B cell (primary cell): ENCODE measurements at regions of chr16 and their contacts with region 1.

Region 1: GRCh38 chr16:71591917-71592316 is 15.0 kb upstream of the TAT start:
- DNase-seq: no peak
- ATAC-seq: no peak
- H3K4me3 ChIP-seq: no peak overlapping the region
- H3K4me3 Mint-ChIP-seq: no peak overlapping the region
- H3K27ac ChIP-seq: no peak overlapping the region
- H3K27ac Mint-ChIP-seq: no peak overlapping the region
- H3K4me1 ChIP-seq: peaks cover 0 to 8% of the 10 kb centered on the region in 2 donors
- H3K4me1 Mint-ChIP-seq: peaks cover 8% of the 10 kb centered on the region
- H3K27me3 ChIP-seq: peaks cover 0 to 19% (median 7%) of the 10 kb centered on the region in 4 experiments
- H3K27me3 Mint-ChIP-seq: peaks cover 34% of the 10 kb centered on the region
- CTCF ChIP-seq: no peak

Region 2: GRCh38 chr16:71373073-71373472 is 218.8 kb before region 1 on chr16:
- CTCF ChIA-PET with region 1: no interaction called
- POLR2A ChIA-PET with region 1: no interaction called
- intact Hi-C with region 1: no loop called
- DNase-seq: no peak
- ATAC-seq: no peak
- H3K4me3 ChIP-seq: no peak overlapping the region
- H3K4me3 Mint-ChIP-seq: no peak overlapping the region
- H3K27ac ChIP-seq: no peak overlapping the region
- H3K27ac Mint-ChIP-seq: no peak overlapping the region
- H3K4me1 ChIP-seq: no peaks in the 10 kb centered on the region
- H3K4me1 Mint-ChIP-seq: no peaks in the 10 kb centered on the region
- H3K27me3 ChIP-seq: peaks cover 0 to 6% (median 2%) of the 10 kb centered on the region in 4 experiments
- H3K27me3 Mint-ChIP-seq: peaks cover 44% of the 10 kb centered on the region
- CTCF ChIP-seq: no peak

Region 3: DNA sequence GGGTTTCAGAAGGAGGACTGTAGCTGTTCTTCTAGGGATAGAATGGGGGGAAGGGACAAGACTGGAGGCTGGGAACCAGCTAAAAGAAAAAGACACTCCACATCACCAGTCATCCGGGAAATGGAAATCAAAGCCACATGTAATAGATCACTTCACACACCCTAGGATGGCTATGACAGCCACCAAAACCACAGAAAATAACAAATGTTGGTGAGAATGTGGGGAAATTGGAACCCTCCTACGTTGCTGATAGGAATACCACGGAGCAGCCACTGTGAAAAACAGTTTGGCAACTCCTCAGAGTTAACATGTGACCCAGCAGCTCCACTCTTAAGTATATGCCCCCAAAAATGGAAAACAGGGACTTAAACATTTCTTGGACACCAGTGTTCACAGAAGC is 152.4 kb before region 1 on chr16:
- CTCF ChIA-PET with region 1: no interaction called
- POLR2A ChIA-PET with region 1: no interaction called
- intact Hi-C with region 1: no loop called
- DNase-seq: no peak
- ATAC-seq: no peak
- H3K4me3 ChIP-seq: no peak overlapping the region
- H3K4me3 Mint-ChIP-seq: no peak overlapping the region
- H3K27ac ChIP-seq: no peak overlapping the region
- H3K27ac Mint-ChIP-seq: no peak overlapping the region
- H3K4me1 ChIP-seq: no peaks in the 10 kb centered on the region
- H3K4me1 Mint-ChIP-seq: no peaks in the 10 kb centered on the region
- H3K27me3 ChIP-seq: peaks cover 0 to 12% (median 2%) of the 10 kb centered on the region in 4 experiments
- H3K27me3 Mint-ChIP-seq: peaks cover 18% of the 10 kb centered on the region
- CTCF ChIP-seq: no peak

Region 4: GRCh38 chr16:71622088-71622487 is 30.2 kb after region 1 on chr16:
- CTCF ChIA-PET with region 1: no interaction called
- POLR2A ChIA-PET with region 1: interaction called, 11 read pairs
- intact Hi-C with region 1: no loop called
- DNase-seq: no peak
- ATAC-seq: no peak
- H3K4me3 ChIP-seq: no peak overlapping the region
- H3K4me3 Mint-ChIP-seq: no peak overlapping the region
- H3K27ac ChIP-seq: no peak overlapping the region
- H3K27ac Mint-ChIP-seq: no peak overlapping the region
- H3K4me1 ChIP-seq: peaks cover 16 to 20% of the 10 kb centered on the region in 2 donors
- H3K4me1 Mint-ChIP-seq: peaks cover 9% of the 10 kb centered on the region
- H3K27me3 ChIP-seq: peaks cover 0 to 30% (median 23%) of the 10 kb centered on the region in 4 experiments
- H3K27me3 Mint-ChIP-seq: peaks cover 11% of the 10 kb centered on the region
- CTCF ChIP-seq: no peak